Mammary epithelial cell (primary cell): ENCODE measurements at regions of chr5 and their contacts with region 1.

Region 1: GRCh38 chr5:82225525-82226172 is 52.5 kb downstream of the RPS23 start:
- DNase-seq: peak; percentile 60
- H3K4me3 ChIP-seq: no peak overlapping the region
- H3K27ac ChIP-seq: no peak overlapping the region
- H3K4me1 ChIP-seq: no peaks in the 10 kb centered on the region
- H3K27me3 ChIP-seq: no peaks in the 10 kb centered on the region
- CTCF ChIP-seq: peak; percentile 87 to 94

Region 2: GRCh38 chr5:81425569-81425968 is 800.1 kb before region 1 on chr5:
- CTCF ChIA-PET with region 1: no interaction called
- dilution Hi-C with region 1: no loop called
- in situ Hi-C with region 1: no loop called
- intact Hi-C with region 1: loop called (anchors 5 kb)
- DNase-seq: peak; percentile 27
- H3K4me3 ChIP-seq: no peak overlapping the region
- H3K27ac ChIP-seq: no peak overlapping the region
- H3K4me1 ChIP-seq: peaks cover 7% of the 10 kb centered on the region
- H3K27me3 ChIP-seq: no peaks in the 10 kb centered on the region
- CTCF ChIP-seq: peak; percentile 44 to 48

Region 3: DNA sequence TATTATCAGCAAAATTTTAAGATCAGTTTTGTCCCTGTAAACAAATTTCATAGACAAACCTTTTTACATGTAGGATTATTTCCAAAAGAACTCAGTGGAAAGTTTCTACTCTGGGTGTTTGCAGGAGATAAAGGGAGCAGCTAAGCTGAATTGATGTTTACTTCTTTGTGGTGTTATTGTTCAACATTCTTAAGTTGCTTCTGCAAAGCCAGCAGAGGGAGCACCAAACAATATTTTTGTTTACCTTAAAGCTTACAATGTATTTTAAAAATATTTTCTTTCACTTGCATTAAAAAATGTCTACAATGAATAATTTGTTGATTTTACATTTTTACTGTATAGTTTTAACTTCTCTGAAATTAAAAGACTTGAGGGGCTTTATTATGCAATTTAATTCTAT is 118.4 kb before region 1 on chr5:
- CTCF ChIA-PET with region 1: no interaction called
- dilution Hi-C with region 1: no loop called
- in situ Hi-C with region 1: no loop called
- intact Hi-C with region 1: loop called (anchors 5 kb)
- DNase-seq: no peak
- H3K4me3 ChIP-seq: no peak overlapping the region
- H3K27ac ChIP-seq: no peak overlapping the region
- H3K4me1 ChIP-seq: peaks cover 11% of the 10 kb centered on the region
- H3K27me3 ChIP-seq: no peaks in the 10 kb centered on the region
- CTCF ChIP-seq: peak; percentile 18 to 52

Region 4: DNA sequence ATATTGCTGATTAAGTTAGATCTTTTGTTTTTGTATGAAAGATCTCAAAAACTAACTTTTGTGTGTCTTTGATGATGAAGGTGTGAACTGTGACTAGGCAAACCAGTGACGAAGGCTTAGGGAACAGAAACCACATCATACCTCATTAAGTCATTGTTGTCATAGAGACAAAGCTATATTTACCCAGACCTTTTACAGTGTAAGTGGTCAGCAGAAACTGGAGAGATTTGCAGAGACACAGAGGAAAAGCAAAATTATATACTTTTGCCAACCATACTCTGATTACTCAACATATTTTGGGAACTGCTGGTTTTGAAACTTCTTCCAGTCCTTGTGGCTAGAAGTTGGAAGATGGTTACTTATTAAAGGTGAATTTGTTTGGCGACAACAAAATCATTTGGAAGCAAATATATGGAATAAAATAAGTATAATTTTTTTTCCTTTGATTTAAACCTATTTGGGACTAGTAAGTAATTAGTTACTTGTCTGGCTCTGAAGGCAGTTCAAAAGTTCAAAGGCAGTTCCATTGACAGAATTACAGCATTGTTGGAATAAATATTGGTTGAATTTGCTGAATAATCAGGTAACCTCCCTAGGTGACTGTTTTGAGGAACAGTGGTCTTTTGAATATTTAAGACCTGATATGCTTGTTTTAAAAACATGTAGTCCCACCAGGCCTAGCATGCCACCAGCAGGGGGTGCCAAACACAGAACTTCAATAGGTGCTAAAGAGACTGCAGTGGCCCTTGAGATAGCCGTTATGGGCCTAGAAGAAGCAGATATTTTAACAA is 51.3 kb before region 1 on chr5:
- CTCF ChIA-PET with region 1: no interaction called
- dilution Hi-C with region 1: loop called (anchors 5 kb)
- in situ Hi-C with region 1: loop called in 1 of 2 experiments (anchors 10 kb)
- intact Hi-C with region 1: loop called (anchors 1 kb)
- DNase-seq: peak; percentile 36
- H3K4me3 ChIP-seq: no peak overlapping the region
- H3K27ac ChIP-seq: peak overlapping the region; percentile 11
- H3K4me1 ChIP-seq: no peaks in the 10 kb centered on the region
- H3K27me3 ChIP-seq: no peaks in the 10 kb centered on the region
- CTCF ChIP-seq: peak; percentile 89 to 96

Region 5: GRCh38 chr5:82183828-82184227 is 41.8 kb before region 1 on chr5:
- CTCF ChIA-PET with region 1: no interaction called
- dilution Hi-C with region 1: loop called (anchors 5 kb)
- in situ Hi-C with region 1: loop called (anchors 5 to 10 kb)
- intact Hi-C with region 1: no loop called
- DNase-seq: peak; percentile 94
- H3K4me3 ChIP-seq: no peak overlapping the region
- H3K27ac ChIP-seq: no peak overlapping the region
- H3K4me1 ChIP-seq: peaks cover 12% of the 10 kb centered on the region
- H3K27me3 ChIP-seq: no peaks in the 10 kb centered on the region
- CTCF ChIP-seq: no peak